K562 (cell line): ENCODE measurements at regions of chr2 and their contacts with region 1.

Region 1: DNA sequence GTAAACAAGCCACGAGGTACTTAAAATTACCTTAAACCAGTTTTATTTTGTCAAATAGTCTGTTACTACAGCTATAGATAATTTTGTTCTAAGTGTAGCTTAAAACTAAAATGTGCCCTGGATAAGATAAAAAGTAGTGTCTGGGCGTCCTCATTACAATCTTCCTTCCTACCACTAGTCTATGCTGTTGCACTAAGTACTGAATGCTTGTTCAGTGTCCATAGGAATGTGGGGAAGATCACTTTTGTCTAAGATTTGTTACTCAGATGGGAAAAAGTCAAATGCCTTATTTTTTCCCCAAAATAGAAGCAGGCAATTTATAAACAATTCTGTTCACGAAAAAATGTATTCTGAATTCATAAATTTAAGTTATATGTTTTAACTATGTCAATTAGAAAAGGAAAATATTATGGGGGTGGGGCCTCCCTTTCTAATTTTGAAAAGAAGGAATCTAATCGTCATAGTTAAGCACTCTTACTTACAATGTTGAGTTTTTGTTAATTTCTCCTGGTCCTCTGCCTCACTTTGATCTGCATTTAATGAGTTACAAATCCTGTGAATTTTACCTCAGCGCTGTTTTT is 140.4 kb upstream of the VRK2 start:
- DNase-seq: peak; percentile 46 to 57 (median 52)
- ATAC-seq: peak; percentile 99
- H3K4me3 ChIP-seq: no peak overlapping the region
- H3K27ac ChIP-seq: no peak overlapping the region
- H3K4me1 ChIP-seq: no peaks in the 10 kb centered on the region
- H3K27me3 ChIP-seq: peaks cover 0 to 3% of the 10 kb centered on the region in 2 experiments; a peak in 1 of 5 replicates
- CTCF ChIP-seq: peak; percentile 66 to 84 (median 69)
- EP300 ChIP-seq: no peak
- POLR2A ChIP-seq: no peak
- RAD21 ChIP-seq: peak; percentile 88 to 93

Region 2: DNA sequence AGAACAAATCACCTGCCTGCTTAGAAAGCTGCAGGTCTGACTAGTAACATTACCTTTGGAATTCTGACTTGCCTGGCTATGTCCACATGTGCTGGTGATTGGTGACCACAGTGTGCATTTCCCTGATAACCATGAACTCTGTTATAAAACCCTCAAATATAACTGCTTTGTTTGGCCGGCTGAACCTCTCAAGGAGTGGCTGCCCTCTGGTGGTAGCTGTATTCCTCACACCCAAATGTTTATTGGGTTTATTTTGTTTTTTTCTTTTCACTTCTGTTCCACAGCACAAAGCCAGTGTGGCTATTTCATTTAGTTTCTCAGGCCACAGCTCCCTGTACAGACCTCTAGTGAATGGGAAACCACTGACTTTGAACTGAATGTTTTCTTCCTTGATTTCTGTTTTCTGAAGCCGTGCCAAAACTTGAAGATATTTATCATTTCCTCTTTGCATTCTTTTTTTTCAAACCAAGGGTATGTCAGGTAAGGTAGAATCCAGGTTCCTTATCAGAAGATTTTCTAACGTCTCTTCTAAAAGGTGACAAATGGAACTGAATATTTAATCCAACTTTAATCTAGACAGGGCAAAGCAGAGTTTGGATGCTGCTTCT is 408.6 kb before region 1 on chr2:
- CTCF ChIA-PET with region 1: no interaction called
- POLR2A ChIA-PET with region 1: no interaction called
- in situ Hi-C with region 1: no loop called
- intact Hi-C with region 1: no loop called
- DNase-seq: peak; percentile 23 to 49 (median 27)
- ATAC-seq: peak; percentile 72
- H3K4me3 ChIP-seq: no peak overlapping the region
- H3K27ac ChIP-seq: no peak overlapping the region
- H3K4me1 ChIP-seq: no peaks in the 10 kb centered on the region
- H3K27me3 ChIP-seq: no peaks in the 10 kb centered on the region
- CTCF ChIP-seq: peak; percentile 47 to 66 (median 66); a peak in 5 of 6 replicates
- EP300 ChIP-seq: no peak
- POLR2A ChIP-seq: no peak
- RAD21 ChIP-seq: peak; percentile 33 to 69; a peak in 3 of 4 replicates

Region 3: DNA sequence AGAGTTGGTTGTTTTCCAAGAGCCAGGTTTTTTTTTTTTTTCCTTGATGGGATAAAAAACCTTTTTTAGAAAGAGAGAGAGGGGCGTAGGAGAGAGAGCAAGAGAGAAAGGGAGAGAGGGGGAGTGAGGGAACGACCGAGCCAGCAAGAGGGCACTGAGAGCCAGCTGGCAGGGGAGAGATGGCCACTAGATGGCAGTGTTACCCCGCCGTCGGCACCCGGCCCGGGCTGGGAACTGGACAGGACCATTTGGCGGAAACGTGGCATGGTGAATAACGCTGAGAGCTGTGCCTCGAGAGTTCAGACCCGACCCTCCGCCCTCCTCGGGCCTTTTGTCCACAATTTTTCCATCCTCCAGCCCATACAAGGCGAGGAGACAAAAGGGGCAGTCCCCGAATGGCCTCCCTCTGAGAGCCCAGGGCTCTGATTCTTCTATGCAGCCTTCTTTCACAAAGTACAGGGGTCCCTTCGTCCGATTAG is 146.4 kb before region 1 on chr2:
- CTCF ChIA-PET with region 1: no interaction called
- POLR2A ChIA-PET with region 1: no interaction called
- in situ Hi-C with region 1: no loop called
- intact Hi-C with region 1: loop called (anchors 1 kb)
- DNase-seq: peak; percentile 80 to 85 (median 83)
- ATAC-seq: peak; percentile 99
- H3K4me3 ChIP-seq: no peak overlapping the region
- H3K27ac ChIP-seq: no peak overlapping the region
- H3K4me1 ChIP-seq: peaks cover 0 to 4% of the 10 kb centered on the region in 2 experiments; a peak in 3 of 5 replicates
- H3K27me3 ChIP-seq: no peaks in the 10 kb centered on the region
- CTCF ChIP-seq: peak; percentile 88 to 92 (median 90)
- EP300 ChIP-seq: no peak
- POLR2A ChIP-seq: no peak
- RAD21 ChIP-seq: peak; percentile 82 to 90

Region 4: DNA sequence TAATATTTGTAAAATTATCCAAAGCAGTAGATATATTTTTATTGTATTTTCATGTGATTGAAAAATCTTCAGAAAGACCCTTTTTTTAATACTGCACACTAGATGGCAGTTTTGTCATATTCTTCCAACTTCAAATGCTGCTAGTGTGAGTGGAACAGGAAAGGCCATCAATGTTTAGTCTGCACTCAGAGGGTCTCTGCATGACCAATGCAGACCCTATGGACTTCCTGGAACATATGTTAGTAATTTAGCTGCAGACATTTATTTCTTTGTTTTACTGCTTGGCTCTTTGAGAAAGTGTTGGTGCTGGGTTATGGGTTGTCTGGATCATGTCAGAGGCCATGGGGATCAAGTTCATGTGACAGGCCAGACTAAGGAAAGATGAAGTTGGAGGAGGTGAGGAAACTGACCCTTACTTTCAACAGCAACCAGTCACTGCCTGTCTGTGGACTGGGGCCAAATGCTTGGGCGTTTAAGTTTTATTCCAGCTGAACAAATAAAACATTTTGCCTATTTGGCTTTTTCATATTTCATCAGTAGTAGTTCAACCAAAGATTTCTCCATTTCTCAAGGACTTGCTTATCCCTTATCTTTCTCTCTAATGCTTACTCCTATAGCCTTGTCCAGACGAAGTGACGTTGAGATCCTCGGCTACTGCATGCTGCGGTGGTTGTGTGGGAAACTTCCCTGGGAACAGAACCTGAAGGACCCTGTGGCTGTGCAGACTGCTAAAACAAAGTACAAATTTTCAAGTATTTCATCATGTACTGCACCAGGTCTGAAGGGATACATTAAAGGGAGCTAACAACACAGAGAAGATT is 225.2 kb after region 1 on chr2:
- CTCF ChIA-PET with region 1: no interaction called
- POLR2A ChIA-PET with region 1: no interaction called
- in situ Hi-C with region 1: no loop called
- intact Hi-C with region 1: loop called (anchors 5 kb)
- DNase-seq: no peak
- ATAC-seq: no peak
- H3K4me3 ChIP-seq: no peak overlapping the region
- H3K27ac ChIP-seq: no peak overlapping the region
- H3K4me1 ChIP-seq: no peaks in the 10 kb centered on the region
- H3K27me3 ChIP-seq: no peaks in the 10 kb centered on the region
- CTCF ChIP-seq: peak in 1 of 3 experiments; percentile 28; a peak in 1 of 6 replicates
- EP300 ChIP-seq: no peak
- POLR2A ChIP-seq: no peak
- RAD21 ChIP-seq: peak in 1 of 2 experiments; percentile 35; a peak in 2 of 4 replicates

Region 5: DNA sequence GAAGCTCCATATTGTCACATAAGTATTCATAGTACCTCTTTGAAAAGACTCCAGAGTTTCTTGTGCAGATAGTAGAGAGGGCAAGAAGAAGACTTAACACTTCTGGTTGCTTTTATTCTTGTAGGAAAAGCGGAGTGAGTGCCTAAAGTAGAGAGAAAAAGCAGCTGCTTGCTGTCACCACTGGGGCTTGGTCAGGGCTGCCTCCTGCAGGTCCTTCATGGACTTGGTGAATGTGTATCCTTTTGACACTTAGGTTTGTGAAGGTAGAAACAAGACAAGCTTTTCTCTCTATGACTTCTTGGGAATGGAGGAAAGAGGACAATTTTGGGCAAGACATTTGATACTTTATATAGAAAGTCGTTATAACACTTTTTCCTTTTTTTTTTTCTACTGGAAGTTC is 647.7 kb after region 1 on chr2:
- CTCF ChIA-PET with region 1: interaction called, 3 read pairs
- POLR2A ChIA-PET with region 1: no interaction called
- in situ Hi-C with region 1: no loop called
- intact Hi-C with region 1: loop called (anchors 1 kb)
- DNase-seq: peak in 2 of 4 experiments; percentile 9 to 32
- ATAC-seq: peak; percentile 87
- H3K4me3 ChIP-seq: no peak overlapping the region
- H3K27ac ChIP-seq: no peak overlapping the region
- H3K4me1 ChIP-seq: no peaks in the 10 kb centered on the region
- H3K27me3 ChIP-seq: no peaks in the 10 kb centered on the region
- CTCF ChIP-seq: peak; percentile 50 to 71 (median 56)
- EP300 ChIP-seq: no peak
- POLR2A ChIP-seq: no peak
- RAD21 ChIP-seq: peak; percentile 43 to 72

Region 6: GRCh38 chr2:58680755-58681310 is 774.6 kb after region 1 on chr2:
- CTCF ChIA-PET with region 1: no interaction called
- POLR2A ChIA-PET with region 1: no interaction called
- in situ Hi-C with region 1: no loop called
- intact Hi-C with region 1: loop called (anchors 10 kb)
- DNase-seq: no peak
- ATAC-seq: no peak
- H3K4me3 ChIP-seq: no peak overlapping the region
- H3K27ac ChIP-seq: no peak overlapping the region
- H3K4me1 ChIP-seq: no peaks in the 10 kb centered on the region
- H3K27me3 ChIP-seq: no peaks in the 10 kb centered on the region
- CTCF ChIP-seq: peak in 1 of 3 experiments; percentile 10; a peak in 1 of 6 replicates
- EP300 ChIP-seq: no peak
- POLR2A ChIP-seq: no peak
- RAD21 ChIP-seq: 0 out of 4 replicates have a peak, but pooled peaks of 1 of the 2 experiments have one; percentile 25